ENCODE measurements at regions of chr11 and their contacts with region 1.

Region 1: GRCh38 chr11:116890193-116890592 is 52.8 kb upstream of the APOA1 start:
- DNase-seq: peak; percentile 46
- H3K4me3 ChIP-seq: no peak overlapping the region
- H3K27ac ChIP-seq: no peak overlapping the region
- H3K4me1 ChIP-seq: peaks cover 3% of the 10 kb centered on the region
- H3K27me3 ChIP-seq: no peaks in the 10 kb centered on the region
- CTCF ChIP-seq: no peak
- POLR2A ChIP-seq: no peak

Region 2: DNA sequence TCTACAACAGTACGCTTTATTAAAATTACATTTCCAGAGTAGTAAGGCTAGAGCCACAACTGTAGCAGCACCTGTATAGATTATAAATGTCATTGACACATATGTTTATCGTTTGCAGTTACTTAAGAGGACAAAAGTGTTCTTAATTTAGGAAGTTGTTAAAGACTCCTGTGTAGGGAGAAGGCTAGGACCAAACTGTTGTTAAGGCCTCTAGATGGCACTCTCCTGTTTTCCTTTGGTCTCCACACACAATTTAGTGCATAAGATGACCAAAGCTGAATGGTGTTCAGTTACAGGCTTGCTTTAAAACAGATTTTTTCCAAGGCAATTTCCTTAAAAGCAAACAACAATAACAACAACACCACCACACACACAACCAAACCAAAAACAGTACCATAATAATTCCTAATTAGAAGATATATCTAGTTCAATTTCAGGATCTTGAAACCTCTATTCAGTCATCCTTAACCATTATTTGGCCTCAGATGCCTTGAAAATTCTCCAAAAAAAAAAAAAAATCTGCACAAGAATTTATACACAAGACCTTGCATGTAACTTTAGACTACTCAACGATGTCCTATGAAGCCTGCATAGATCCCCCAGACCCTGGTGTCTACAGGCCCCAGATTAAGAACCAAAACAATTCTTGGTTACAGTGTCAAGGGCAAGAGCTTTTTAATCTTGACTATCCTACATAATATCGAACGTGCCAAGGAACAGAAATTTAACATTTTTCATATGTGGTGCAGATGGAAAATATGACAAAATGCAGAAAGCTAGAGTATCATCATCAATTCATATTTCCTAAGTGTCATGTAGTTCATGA is 10.2 kb before region 1 on chr11:
- CTCF ChIA-PET with region 1: interaction called, 33 read pairs
- POLR2A ChIA-PET with region 1: no interaction called
- dilution Hi-C with region 1: no loop called
- intact Hi-C with region 1: no loop called
- DNase-seq: peak; percentile 76
- H3K4me3 ChIP-seq: no peak overlapping the region
- H3K27ac ChIP-seq: no peak overlapping the region
- H3K4me1 ChIP-seq: no peaks in the 10 kb centered on the region
- H3K27me3 ChIP-seq: no peaks in the 10 kb centered on the region
- CTCF ChIP-seq: peak; percentile 55 to 68
- POLR2A ChIP-seq: no peak

Region 3: DNA sequence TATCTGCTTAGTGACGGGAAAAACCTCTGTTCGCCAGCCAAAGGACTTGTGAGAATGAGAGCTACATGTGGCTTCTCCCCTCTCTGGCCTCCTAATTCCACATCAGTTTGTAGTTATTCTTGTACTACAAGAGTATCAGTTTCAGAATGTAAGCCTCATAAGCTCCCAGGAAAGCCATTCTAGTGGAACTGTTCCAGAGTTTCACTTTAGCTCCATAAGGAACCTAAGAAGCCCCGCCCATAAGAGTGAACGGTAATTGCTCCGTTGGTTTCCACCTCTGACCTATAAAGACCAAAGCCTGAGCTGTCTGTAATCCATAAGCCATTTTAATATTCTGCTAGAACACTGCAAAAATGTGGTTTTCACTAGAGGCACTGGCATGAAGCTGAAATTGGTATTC is 155.0 kb after region 1 on chr11:
- CTCF ChIA-PET with region 1: no interaction called
- POLR2A ChIA-PET with region 1: no interaction called
- dilution Hi-C with region 1: no loop called
- intact Hi-C with region 1: no loop called
- DNase-seq: no peak
- H3K4me3 ChIP-seq: no peak overlapping the region
- H3K27ac ChIP-seq: no peak overlapping the region
- H3K4me1 ChIP-seq: peaks cover 6% of the 10 kb centered on the region
- H3K27me3 ChIP-seq: no peaks in the 10 kb centered on the region
- CTCF ChIP-seq: no peak
- POLR2A ChIP-seq: no peak

Region 4: DNA sequence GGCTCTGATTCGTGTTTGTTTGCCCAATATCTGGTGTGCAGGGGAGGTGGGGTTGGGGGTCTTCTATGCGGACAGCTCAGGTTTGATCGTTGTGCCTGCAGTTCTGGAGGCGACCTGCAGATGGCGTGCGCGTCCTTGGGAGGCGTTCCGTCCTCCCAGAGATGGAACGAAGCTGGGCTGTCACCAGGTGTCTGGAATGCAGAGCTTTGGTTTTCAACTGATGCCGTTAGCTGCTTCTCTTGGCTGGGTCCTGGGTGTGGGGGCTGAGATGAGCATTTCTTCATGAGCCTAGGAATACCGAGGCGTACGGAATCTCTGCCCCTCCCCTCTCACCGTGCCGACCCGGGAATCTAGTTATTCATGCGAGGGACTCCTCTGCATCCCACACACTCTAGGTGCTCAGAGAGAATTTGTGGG is 536.1 kb after region 1 on chr11:
- CTCF ChIA-PET with region 1: no interaction called
- POLR2A ChIA-PET with region 1: no interaction called
- dilution Hi-C with region 1: no loop called
- intact Hi-C with region 1: no loop called
- DNase-seq: peak; percentile 46
- H3K4me3 ChIP-seq: no peak overlapping the region
- H3K27ac ChIP-seq: no peak overlapping the region
- H3K4me1 ChIP-seq: no peaks in the 10 kb centered on the region
- H3K27me3 ChIP-seq: no peaks in the 10 kb centered on the region
- CTCF ChIP-seq: peak; percentile 93 to 96
- POLR2A ChIP-seq: no peak

Measured in endothelial cell of umbilical vein (primary cell).